Heart right ventricle (tissue), 16 donors: ENCODE measurements at regions of chr18 and their contacts with region 1.

Region 1: DNA sequence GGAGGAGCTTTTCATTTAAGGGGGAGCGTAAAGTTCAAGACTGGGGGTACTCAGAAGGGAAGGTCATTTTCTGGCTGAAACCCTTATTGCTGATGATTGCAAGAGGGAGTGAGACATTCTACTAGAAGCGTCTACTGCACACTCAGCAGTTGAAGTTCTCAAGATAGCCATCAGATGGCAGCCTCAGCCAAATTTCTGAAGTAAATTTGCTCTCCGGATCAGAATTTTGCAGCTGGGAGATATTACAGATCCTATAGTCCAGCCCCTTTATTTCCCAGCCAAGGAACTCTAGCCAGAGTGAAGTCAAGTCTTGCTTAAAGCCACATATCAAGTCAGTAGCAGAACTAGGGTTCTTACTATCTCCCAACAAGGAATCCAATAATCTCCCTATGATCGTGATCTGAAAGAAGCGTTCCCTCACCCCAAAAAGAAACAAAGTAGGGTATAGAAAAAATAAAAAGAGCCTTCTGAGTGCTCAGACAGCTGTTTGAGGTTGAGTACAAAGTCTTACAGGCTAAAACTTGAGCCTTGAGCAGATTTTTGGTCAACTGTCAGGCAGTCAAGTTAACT is 24.0 kb downstream of the RAX start:
- DNase-seq: peak in 1 of 2 donors; percentile 42
- ATAC-seq: peak in 4 of 8 donors; percentile 33 to 64 (median 45)
- H3K4me3 ChIP-seq: no peak overlapping the region
- H3K27ac ChIP-seq: no peak overlapping the region
- H3K4me1 ChIP-seq: no peaks in the 10 kb centered on the region
- H3K27me3 ChIP-seq: peaks cover 8 to 56% (median 41%) of the 10 kb centered on the region in 7 donors
- CTCF ChIP-seq: peak; percentile 22 to 75 (median 66)

Region 2: DNA sequence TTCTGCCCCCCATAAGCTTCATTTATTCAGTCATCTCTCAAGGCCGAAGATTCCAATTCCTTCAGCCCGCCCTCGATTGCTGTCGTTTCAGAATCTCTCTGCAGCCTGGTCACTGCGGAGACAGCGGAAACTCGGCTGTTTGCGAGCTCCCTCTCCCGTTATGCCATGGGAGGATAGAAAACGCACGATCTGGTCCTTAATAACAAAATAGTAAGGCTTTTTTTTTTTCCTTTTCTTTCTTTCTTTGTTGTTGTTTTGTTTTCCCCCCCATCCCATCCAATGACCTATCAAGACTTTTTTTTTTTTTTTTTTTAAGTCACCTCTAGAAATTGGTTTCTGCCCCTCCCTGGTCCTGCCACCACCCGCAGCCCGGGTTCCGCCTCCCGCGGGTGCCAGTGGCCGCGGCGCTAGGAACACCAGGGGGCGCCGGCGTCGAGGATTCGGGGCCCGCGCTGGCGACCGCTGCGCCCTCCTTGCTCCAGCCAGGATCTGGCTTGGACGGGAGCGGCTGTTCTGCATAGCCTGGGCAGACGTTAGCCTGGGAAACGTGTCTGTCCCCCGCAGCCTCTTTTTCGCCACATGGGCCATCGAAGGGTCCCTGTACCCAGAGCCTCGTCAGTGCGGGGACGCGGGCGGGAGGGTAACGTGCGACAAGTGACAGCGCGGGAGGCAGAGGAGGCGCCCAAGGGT is 59.1 kb after region 1 on chr18:
- intact Hi-C with region 1: loop called in 1 of 10 experiments (anchors 10 kb)
- DNase-seq: peak; percentile 69 to 83
- ATAC-seq: peak; percentile 94 to 99 (median 96)
- H3K4me3 ChIP-seq: peak overlapping the region in 7 of 10 donors; percentile 27 to 53 (median 38)
- H3K27ac ChIP-seq: no peak overlapping the region
- H3K4me1 ChIP-seq: peaks cover 0 to 13% (median 6%) of the 10 kb centered on the region in 9 donors
- H3K27me3 ChIP-seq: peaks cover 0 to 74% (median 44%) of the 10 kb centered on the region in 7 donors
- CTCF ChIP-seq: peak; percentile 71 to 91 (median 81)